IMR-90 (cell line): ENCODE measurements at regions of chr17 and their contacts with region 1.

Region 1: GRCh38 chr17:13513039-13513405 is 88.7 kb downstream of the HS3ST3A1 start:
- DNase-seq: peak; percentile 27
- ATAC-seq: peak; percentile 49; the same call in 1 of the 2 replicates
- H3K4me3 ChIP-seq: no peak overlapping the region
- H3K27ac ChIP-seq: peak overlapping the region; percentile 18; the same call in 1 of the 2 replicates
- H3K4me1 ChIP-seq: peaks cover 4% of the 10 kb centered on the region
- H3K27me3 ChIP-seq: no peaks in the 10 kb centered on the region
- CTCF ChIP-seq: no peak
- POLR2A ChIP-seq: no peak
- RAD21 ChIP-seq: no peak

Region 2: GRCh38 chr17:13153036-13153435 is 360.0 kb before region 1 on chr17:
- CTCF ChIA-PET with region 1: no interaction called
- POLR2A ChIA-PET with region 1: interaction called, 23 read pairs
- dilution Hi-C with region 1: no loop called
- in situ Hi-C with region 1: no loop called
- intact Hi-C with region 1: no loop called
- DNase-seq: peak; percentile 59
- ATAC-seq: peak; percentile 61
- H3K4me3 ChIP-seq: no peak overlapping the region
- H3K27ac ChIP-seq: no peak overlapping the region
- H3K4me1 ChIP-seq: no peaks in the 10 kb centered on the region; the same call in 1 of the 2 replicates
- H3K27me3 ChIP-seq: peaks cover 2% of the 10 kb centered on the region; the same call in 1 of the 2 replicates
- CTCF ChIP-seq: no peak
- POLR2A ChIP-seq: no peak
- RAD21 ChIP-seq: no peak

Region 3: GRCh38 chr17:13491916-13492736 is 20.9 kb before region 1 on chr17:
- CTCF ChIA-PET with region 1: no interaction called
- POLR2A ChIA-PET with region 1: no interaction called
- dilution Hi-C with region 1: no loop called
- in situ Hi-C with region 1: no loop called
- intact Hi-C with region 1: loop called (anchors 1 kb)
- DNase-seq: no peak
- ATAC-seq: no peak
- H3K4me3 ChIP-seq: no peak overlapping the region
- H3K27ac ChIP-seq: no peak overlapping the region
- H3K4me1 ChIP-seq: 0 out of 2 replicates have a peak, but pooled peaks cover 2% of the 10 kb centered on the region
- H3K27me3 ChIP-seq: no peaks in the 10 kb centered on the region
- CTCF ChIP-seq: no peak
- POLR2A ChIP-seq: no peak
- RAD21 ChIP-seq: no peak

Region 4: DNA sequence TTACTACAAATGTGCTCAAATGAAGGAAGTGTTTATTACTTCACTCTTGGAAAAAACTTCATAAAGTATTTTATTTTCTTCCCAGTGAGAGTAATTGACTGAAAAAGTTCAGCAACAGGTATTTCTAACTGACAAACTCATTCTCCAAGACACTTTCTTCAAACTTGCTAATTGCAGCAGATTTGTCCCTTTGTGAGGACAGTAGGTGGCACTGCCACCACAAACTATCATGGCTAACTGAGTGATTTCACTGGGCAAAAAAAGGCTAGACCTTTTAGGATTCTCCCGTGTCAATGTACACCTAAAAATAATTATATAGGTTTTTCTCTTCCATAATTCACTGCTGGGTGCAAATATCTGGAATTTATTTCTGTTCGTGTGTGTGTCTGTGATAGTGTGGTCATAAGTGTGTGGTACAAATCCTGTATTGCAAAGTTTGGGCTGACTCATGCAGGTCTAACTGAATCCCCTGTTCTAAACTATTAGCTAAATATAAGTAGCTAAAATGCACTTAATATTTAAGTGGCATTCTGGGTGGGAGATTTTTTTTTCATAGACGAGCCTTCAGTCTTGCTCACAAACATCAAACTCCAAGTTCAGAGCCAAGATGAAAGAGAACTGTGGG is 84.8 kb after region 1 on chr17:
- CTCF ChIA-PET with region 1: no interaction called
- POLR2A ChIA-PET with region 1: no interaction called
- dilution Hi-C with region 1: no loop called
- in situ Hi-C with region 1: no loop called
- intact Hi-C with region 1: no loop called
- DNase-seq: peak; percentile 64
- ATAC-seq: no peak
- H3K4me3 ChIP-seq: peak overlapping the region; percentile 13; the same call in 1 of the 2 replicates
- H3K27ac ChIP-seq: peak overlapping the region; percentile 7; the same call in 1 of the 2 replicates
- H3K4me1 ChIP-seq: peaks cover 19% of the 10 kb centered on the region
- H3K27me3 ChIP-seq: no peaks in the 10 kb centered on the region
- CTCF ChIP-seq: peak; percentile 56
- POLR2A ChIP-seq: no peak
- RAD21 ChIP-seq: peak; percentile 62